ENCODE measurements at regions of chr22 and their contacts with region 1.

Region 1: GRCh38 chr22:20205964-20206708 is 55.3 kb upstream of the CCDC188 start:
- DNase-seq: peak; percentile 83
- H3K4me3 Mint-ChIP-seq: peak overlapping the region; percentile 86
- H3K27ac Mint-ChIP-seq: peak overlapping the region; percentile 88
- H3K4me1 Mint-ChIP-seq: peaks cover 20% of the 10 kb centered on the region
- H3K27me3 Mint-ChIP-seq: no peaks in the 10 kb centered on the region

Region 2: GRCh38 chr22:20238536-20238900 is 32.4 kb after region 1 on chr22:
- CTCF ChIA-PET with region 1: interaction called, 5 read pairs
- intact Hi-C with region 1: loop called (anchors 2 kb)
- DNase-seq: peak; percentile 81
- H3K4me3 Mint-ChIP-seq: no peak overlapping the region
- H3K27ac Mint-ChIP-seq: peak overlapping the region; percentile 36
- H3K4me1 Mint-ChIP-seq: peaks cover 18% of the 10 kb centered on the region
- H3K27me3 Mint-ChIP-seq: no peaks in the 10 kb centered on the region

Measured in activated naive CD4-positive, alpha-beta T cell treated with anti-CD3 and anti-CD28 coated beads for 36 hours (primary cell).